Naive thymus-derived CD4-positive, alpha-beta T cell (primary cell): ENCODE measurements at regions of chr19 and their contacts with region 1.

Region 1: GRCh38 chr19:40609561-40610395 is 8.6 kb downstream of the LTBP4 start:
- DNase-seq: peak; percentile 67 to 96 (median 78)
- ATAC-seq: peak; percentile 64
- H3K4me3 ChIP-seq: peak overlapping the region; percentile 63
- H3K4me3 Mint-ChIP-seq: peak overlapping the region; percentile 75 to 92 (median 86)
- H3K27ac ChIP-seq: peak overlapping the region; percentile 74
- H3K27ac Mint-ChIP-seq: peak overlapping the region; percentile 89 to 100 (median 92)
- H3K4me1 ChIP-seq: peaks cover 35 to 45% of the 10 kb centered on the region in 2 donors
- H3K4me1 Mint-ChIP-seq: peaks cover 20 to 78% (median 63%) of the 10 kb centered on the region in 7 donors
- H3K27me3 ChIP-seq: no peaks in the 10 kb centered on the region
- H3K27me3 Mint-ChIP-seq: peaks cover 0 to 8% (median 0%) of the 10 kb centered on the region in 5 donors

Region 2: GRCh38 chr19:40348125-40348913 is 261.5 kb before region 1 on chr19 and contains the starts of genes C19orf47 and PLD3:
- CTCF ChIA-PET with region 1: no interaction called
- POLR2A ChIA-PET with region 1: no interaction called
- intact Hi-C with region 1: loop called (anchors 2 kb)
- DNase-seq: peak; percentile 92 to 99 (median 97)
- ATAC-seq: peak; percentile 97
- H3K4me3 ChIP-seq: peak within 1 kb of the TSS; percentile 61
- H3K4me3 Mint-ChIP-seq: peak within 1 kb of the TSS; percentile 83 to 99 (median 96)
- H3K27ac ChIP-seq: peak within 1 kb of the TSS; percentile 86
- H3K27ac Mint-ChIP-seq: peak within 1 kb of the TSS; percentile 81 to 98 (median 93)
- H3K4me1 ChIP-seq: peaks cover 7 to 14% of the 10 kb centered on the region in 2 donors
- H3K4me1 Mint-ChIP-seq: peaks cover 20 to 51% (median 44%) of the 10 kb centered on the region in 7 donors
- H3K27me3 ChIP-seq: no peaks in the 10 kb centered on the region
- H3K27me3 Mint-ChIP-seq: peaks cover 0 to 2% (median 0%) of the 10 kb centered on the region in 5 donors
- total RNA-seq, gene C19orf47: 12.6 to 20.3 (median 15.8) TPM
- total RNA-seq, gene PLD3: 75.4 to 137 (median 114) TPM

Region 3: DNA sequence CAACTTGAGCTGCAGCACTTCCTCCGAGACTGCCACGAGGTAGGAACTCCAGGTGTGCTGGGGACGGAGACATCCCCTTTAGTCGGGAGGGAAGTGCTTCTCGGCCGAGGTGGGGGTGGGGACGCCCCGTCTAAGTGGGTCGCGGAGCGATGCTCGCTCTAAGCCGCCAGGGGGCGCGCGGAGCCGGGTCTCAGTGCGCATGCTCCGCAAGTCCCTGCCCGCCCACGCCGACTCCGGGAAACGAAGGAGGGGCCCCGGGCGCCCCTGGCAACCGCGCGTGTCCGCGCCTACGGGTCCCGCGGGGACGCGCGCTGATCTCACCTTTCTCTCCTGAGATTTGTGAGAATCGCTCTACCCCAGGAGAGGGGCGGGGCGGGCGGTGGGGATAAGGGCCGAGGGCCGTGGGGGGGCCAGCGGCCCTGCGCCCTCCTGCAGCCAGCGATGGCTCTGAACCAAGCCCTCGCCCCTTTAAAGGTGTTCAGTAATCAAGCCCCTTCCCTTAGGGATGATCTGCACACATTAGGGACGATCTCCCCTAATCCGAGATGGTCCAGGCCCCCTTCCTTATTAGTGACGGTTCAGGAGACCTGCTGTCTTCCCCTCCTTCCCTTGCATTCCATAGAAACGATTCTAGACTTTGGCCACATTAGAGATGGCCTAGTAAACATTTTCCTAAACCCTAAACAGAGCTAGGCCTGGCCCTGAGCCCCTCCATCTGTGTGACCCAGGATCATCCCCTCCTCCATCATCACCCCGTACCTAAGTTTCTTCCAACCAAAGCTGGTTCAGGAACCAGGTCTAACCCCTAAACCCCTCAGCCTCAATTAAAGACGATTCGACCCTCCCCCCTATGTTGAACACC is 80.5 kb before region 1 on chr19:
- CTCF ChIA-PET with region 1: no interaction called
- POLR2A ChIA-PET with region 1: interaction called, 4 read pairs
- intact Hi-C with region 1: loop called in 1 of 2 experiments (anchors 1 kb)
- DNase-seq: peak; percentile 84 to 97 (median 89)
- ATAC-seq: peak; percentile 97
- H3K4me3 ChIP-seq: peak overlapping the region; percentile 72
- H3K4me3 Mint-ChIP-seq: peak overlapping the region; percentile 66 to 87 (median 81)
- H3K27ac ChIP-seq: no peak overlapping the region
- H3K27ac Mint-ChIP-seq: peak overlapping the region in 6 of 9 donors; percentile 36 to 90 (median 60)
- H3K4me1 ChIP-seq: peaks cover 9 to 16% of the 10 kb centered on the region in 2 donors
- H3K4me1 Mint-ChIP-seq: peaks cover 5 to 25% (median 12%) of the 10 kb centered on the region in 7 donors
- H3K27me3 ChIP-seq: peaks cover 0 to 3% of the 10 kb centered on the region in 2 donors
- H3K27me3 Mint-ChIP-seq: peaks cover 13 to 37% (median 24%) of the 10 kb centered on the region in 5 donors

Region 4: DNA sequence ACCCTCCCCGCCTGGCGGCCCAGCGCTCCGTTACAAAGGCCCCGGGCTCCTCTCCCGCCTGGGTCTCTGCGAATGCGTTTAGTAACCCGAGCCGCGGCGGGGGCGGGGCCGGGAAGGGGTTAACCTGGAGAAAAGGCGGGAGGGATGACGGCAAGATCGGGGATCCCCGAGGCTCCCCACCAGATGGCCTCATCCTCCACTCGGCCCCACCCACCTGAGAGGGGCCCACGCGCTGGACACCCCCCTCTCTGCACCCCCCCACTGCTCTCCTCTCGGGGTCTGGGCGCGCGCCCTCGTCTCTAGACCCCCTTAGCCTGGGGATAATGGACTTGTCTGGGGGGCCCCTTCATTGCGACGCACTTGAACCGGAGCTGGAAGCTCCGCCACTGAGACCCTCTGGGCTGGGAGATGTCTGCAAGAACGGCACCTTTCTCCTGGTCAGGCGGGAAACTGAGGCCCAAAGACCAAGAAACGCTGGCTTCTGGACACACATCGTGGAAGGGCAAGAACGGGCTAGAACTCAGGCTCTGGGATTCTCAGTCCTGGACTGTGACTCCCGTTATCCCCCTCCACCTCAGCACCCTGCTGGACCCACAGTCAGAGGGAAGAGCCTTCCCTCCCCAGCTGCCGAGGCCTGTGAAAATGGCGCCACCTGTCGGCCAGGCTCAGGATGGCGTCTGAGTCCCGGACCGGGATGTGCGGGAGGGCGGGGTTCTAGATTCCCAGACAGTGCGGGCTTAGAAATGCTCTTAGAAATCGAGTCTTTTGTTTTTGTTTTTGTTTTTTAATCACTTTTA is 11.5 kb before region 1 on chr19:
- CTCF ChIA-PET with region 1: interaction called, 14 read pairs
- POLR2A ChIA-PET with region 1: interaction called, 34 read pairs
- intact Hi-C with region 1: loop called in 1 of 2 experiments (anchors 2 kb)
- DNase-seq: peak; percentile 55 to 92 (median 78)
- ATAC-seq: peak; percentile 80
- H3K4me3 ChIP-seq: no peak overlapping the region
- H3K4me3 Mint-ChIP-seq: peak overlapping the region in 8 of 10 donors; percentile 35 to 76 (median 50)
- H3K27ac ChIP-seq: no peak overlapping the region
- H3K27ac Mint-ChIP-seq: peak overlapping the region in 1 of 9 donors; percentile 36
- H3K4me1 ChIP-seq: peaks cover 46 to 47% of the 10 kb centered on the region in 2 donors
- H3K4me1 Mint-ChIP-seq: peaks cover 21 to 60% (median 50%) of the 10 kb centered on the region in 7 donors
- H3K27me3 ChIP-seq: peaks cover 17 to 25% of the 10 kb centered on the region in 2 donors
- H3K27me3 Mint-ChIP-seq: peaks cover 29 to 73% (median 36%) of the 10 kb centered on the region in 5 donors

Region 5: DNA sequence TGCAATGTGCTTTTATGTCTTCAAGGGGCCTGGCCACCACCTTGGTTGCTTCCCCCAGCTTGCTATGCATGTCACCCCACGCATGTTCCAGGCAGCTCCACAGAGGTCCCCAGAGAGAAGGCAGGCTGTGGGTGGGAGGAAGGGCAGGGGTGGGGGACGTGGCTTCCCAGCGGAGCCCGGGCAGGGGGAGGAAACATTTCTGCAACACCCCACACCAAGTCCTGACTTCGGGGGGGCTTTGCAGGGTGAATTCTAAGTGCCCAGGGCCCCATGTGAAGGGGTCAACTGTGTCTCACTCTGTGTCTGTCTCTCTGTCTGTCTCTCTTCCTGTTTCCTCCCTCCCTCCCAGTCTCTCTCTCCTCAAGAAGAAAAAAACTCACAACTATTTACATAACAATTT is 31.0 kb after region 1 on chr19:
- CTCF ChIA-PET with region 1: interaction called, 42 read pairs
- POLR2A ChIA-PET with region 1: interaction called, 19 read pairs
- intact Hi-C with region 1: no loop called
- DNase-seq: peak in 2 of 9 donors; percentile 7 to 8
- ATAC-seq: no peak
- H3K4me3 ChIP-seq: no peak overlapping the region
- H3K4me3 Mint-ChIP-seq: no peak overlapping the region
- H3K27ac ChIP-seq: no peak overlapping the region
- H3K27ac Mint-ChIP-seq: peak overlapping the region in 3 of 9 donors; percentile 33 to 73 (median 60)
- H3K4me1 ChIP-seq: no peaks in the 10 kb centered on the region
- H3K4me1 Mint-ChIP-seq: peaks cover 0 to 12% (median 6%) of the 10 kb centered on the region in 7 donors
- H3K27me3 ChIP-seq: no peaks in the 10 kb centered on the region
- H3K27me3 Mint-ChIP-seq: peaks cover 0 to 8% (median 2%) of the 10 kb centered on the region in 5 donors

Region 6: DNA sequence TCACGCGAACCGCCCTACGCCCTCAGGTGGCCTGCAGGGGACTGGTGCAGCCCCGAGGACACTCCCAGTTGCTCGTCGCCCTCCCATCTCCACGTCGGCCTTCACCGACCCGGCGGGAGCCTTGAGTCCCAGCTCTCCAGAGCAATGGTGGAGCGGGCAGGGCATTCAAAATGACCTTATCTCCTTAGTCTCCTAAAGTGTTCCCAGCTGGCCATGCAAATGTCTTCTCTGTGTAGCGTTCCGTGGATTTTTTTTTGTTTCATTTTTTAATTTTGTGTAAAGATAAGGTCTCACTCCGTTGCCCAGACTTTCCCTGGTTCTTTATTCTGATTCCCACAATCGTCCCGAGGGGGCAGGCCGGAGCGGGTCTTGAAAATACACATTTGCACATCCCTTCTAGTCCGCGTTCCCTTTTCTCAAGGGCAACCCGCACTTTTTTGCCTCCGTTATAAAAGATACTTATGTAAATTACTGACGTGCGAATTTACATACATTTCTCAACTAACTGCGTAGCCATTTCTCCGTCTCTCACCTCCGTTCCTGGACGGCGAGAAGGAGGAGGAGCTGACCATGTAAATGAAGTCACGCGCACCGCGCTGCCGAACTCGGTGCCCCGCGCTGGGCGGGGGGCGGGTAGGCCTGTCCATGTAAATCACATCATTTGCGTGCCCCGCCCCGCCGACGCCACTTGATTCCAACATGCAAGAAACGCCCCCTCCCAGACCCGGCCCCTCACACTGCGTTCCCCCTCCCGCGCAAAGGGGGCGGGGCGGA is 188.6 kb after region 1 on chr19:
- CTCF ChIA-PET with region 1: interaction called, 3 read pairs
- POLR2A ChIA-PET with region 1: interaction called, 3 read pairs
- intact Hi-C with region 1: loop called (anchors 1 to 5 kb)
- DNase-seq: peak; percentile 48 to 100 (median 100)
- ATAC-seq: peak; percentile 92
- H3K4me3 ChIP-seq: peak overlapping the region; percentile 77
- H3K4me3 Mint-ChIP-seq: peak overlapping the region; percentile 89 to 100 (median 95)
- H3K27ac ChIP-seq: peak overlapping the region; percentile 90
- H3K27ac Mint-ChIP-seq: peak overlapping the region; percentile 96 to 100 (median 99)
- H3K4me1 ChIP-seq: peaks cover 35 to 39% of the 10 kb centered on the region in 2 donors
- H3K4me1 Mint-ChIP-seq: peaks cover 28 to 56% (median 48%) of the 10 kb centered on the region in 7 donors
- H3K27me3 ChIP-seq: no peaks in the 10 kb centered on the region
- H3K27me3 Mint-ChIP-seq: no peaks in the 10 kb centered on the region

Region 7: GRCh38 chr19:41016488-41017071 is 406.8 kb after region 1 on chr19:
- CTCF ChIA-PET with region 1: no interaction called
- POLR2A ChIA-PET with region 1: no interaction called
- intact Hi-C with region 1: no loop called
- DNase-seq: peak in 3 of 9 donors; percentile 2 to 9 (median 7)
- ATAC-seq: no peak
- H3K4me3 ChIP-seq: no peak overlapping the region
- H3K4me3 Mint-ChIP-seq: peak overlapping the region in 1 of 10 donors; percentile 7
- H3K27ac ChIP-seq: no peak overlapping the region
- H3K27ac Mint-ChIP-seq: no peak overlapping the region
- H3K4me1 ChIP-seq: no peaks in the 10 kb centered on the region
- H3K4me1 Mint-ChIP-seq: peaks cover 0 to 3% (median 0%) of the 10 kb centered on the region in 7 donors
- H3K27me3 ChIP-seq: no peaks in the 10 kb centered on the region
- H3K27me3 Mint-ChIP-seq: peaks cover 13 to 34% (median 20%) of the 10 kb centered on the region in 5 donors